G401 (cell line): ENCODE measurements at regions of chr4 and their contacts with region 1.

Region 1: DNA sequence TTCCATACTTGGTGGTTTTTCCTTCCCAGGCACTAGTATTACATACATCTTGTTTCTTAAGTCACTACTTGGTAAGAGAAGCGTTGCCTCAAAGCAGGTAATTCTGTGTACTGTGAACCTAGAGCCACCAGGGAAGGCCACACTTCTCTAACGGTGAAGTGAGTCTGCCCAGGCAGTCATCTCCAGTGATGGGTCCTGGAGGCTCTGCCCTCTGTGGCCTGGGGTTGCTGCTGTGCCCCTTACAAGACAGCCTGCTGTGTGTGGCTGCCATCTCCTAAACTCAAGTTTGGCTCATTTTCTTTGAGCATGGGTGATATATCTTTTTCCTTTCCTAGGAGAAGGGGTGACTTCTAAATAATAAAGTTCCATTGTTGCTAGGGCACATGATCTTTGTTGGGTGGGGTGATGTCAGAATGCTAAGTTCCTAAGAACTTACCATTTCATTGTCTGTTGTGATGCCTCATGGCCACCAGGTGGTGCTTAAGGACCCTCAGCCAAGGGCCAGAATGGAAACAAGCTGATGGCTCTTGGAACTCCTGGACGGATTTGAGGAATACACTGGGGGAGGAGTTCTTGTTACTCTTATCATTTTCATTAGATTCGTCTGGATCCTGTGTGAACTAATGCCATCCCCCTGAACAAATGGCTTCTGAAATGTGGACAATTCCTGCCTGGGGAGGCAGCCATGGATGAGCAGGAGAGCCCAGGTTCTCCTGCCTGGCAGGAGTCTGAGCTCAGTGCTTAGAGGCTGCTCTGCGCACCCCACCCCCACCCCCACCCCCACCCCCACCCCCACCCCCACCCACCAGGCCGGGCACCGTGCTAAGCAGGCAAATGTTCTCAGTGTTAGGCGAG is 41.1 kb upstream of the WDR1 start:
- DNase-seq: peak; percentile 80

Region 2: DNA sequence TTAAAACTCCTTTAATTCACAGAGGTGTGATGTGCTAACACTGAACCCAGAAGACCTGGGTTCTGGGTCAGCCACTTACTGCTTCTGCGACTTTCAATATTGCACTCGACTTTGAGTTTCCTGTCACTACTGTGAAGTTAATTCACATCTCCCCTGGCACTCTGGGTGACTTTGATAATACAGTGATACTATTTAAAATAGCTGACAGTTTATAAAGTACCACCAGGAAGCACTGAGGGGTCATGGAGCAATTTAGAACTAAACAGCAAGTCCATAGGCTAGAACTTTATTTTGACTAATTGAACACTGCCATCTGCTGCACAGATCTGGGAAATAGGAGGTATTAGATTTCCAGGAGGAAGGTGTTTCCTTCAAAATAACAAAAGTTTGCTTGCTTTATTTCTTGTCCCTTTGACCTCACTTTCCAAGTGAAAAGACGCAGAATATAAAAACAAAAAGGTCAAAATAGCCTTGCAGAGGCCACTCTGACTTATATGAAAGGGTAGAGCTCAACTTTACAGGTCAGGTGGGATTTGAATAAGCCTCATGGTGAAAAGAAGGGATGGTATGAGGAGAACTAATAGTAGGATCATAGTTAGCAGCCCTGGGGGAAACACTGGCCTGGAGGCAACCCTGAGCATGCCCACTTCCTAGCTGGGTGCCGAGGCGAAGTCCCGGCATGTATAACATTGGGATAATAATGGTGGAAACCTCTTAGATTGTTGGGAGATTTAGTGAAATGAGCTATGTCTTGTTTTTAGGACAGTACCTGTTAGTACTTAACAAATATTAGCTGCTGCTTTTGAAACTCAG is 246.1 kb after region 1 on chr4:
- in situ Hi-C with region 1: loop called (anchors 25 kb)
- DNase-seq: peak; percentile 63